Natural killer cell (primary cell): ENCODE measurements at regions of chr1 and their contacts with region 1.

Region 1: DNA sequence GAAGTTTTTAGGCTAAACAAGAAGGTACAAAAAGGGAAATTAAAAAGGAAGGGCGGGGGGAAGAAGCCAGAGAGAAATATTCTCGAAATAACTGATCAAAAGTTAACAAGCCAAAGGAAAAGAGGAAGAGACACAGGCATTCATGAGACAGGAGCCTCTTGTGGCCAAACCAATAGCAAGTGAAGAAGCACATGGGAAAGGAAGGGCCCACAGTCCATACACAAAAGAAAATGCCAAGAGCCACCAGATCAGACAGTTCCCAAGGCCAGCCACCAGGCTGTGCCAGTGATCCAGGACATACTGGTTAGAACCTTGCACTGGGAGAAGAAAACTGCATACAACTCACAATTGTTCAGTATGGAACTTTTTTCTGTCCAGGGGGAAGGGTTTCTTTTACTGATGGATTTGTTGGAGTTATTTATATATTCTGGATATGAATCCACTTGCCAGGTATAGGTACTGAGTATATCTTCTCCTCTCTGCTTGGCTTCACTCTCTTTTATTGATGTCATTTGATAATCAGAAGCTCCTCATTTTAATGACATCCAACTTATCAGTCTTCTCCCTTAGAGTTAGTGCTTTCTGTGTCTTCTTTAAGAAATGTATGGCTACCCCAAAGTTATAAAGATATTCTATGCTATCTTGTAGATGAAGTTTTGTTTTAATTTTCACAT is 76.8 kb downstream of the CD46 start:
- DNase-seq: peak; percentile 47 to 84
- ATAC-seq: peak; percentile 14 to 36 (median 18)
- H3K4me3 ChIP-seq: no peak overlapping the region
- H3K4me3 Mint-ChIP-seq: no peak overlapping the region
- H3K27ac ChIP-seq: peak overlapping the region; percentile 12
- H3K27ac Mint-ChIP-seq: peak overlapping the region; percentile 99
- H3K4me1 ChIP-seq: peaks cover 76% of the 10 kb centered on the region
- H3K4me1 Mint-ChIP-seq: peaks cover 81 to 85% of the 10 kb centered on the region in 2 donors
- H3K27me3 ChIP-seq: no peaks in the 10 kb centered on the region
- H3K27me3 Mint-ChIP-seq: peaks cover 0 to 3% of the 10 kb centered on the region in 2 donors
- CTCF ChIP-seq: peak; percentile 67

Region 2: DNA sequence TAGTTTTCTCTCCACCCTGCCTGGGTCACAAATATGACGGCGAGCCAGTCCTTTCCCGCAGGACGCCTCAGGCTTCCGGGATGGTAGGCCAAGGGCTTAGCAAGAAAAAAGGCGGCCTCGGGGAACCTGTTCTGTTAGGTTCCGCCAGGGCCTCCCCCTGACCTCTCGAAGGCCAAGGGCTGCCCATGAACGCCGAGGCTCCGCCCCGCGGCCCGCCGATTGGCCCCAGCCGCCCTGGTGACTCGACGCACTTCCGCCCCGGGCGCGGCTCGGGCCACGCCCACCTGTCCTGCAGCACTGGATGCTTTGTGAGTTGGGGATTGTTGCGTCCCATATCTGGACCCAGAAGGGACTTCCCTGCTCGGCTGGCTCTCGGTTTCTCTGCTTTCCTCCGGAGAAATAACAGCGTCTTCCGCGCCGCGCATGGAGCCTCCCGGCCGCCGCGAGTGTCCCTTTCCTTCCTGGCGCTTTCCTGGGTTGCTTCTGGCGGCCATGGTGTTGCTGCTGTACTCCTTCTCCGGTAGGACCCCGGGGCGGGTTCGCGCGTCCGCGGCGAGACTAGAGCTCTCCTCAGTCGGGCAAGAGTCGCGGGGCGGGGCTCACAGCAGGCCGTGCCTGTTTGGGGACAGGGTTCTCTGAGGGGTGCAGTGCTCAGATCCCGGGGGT is 76.7 kb before region 1 on chr1 and contains the start of gene CD46:
- intact Hi-C with region 1: loop called (anchors 2 kb)
- DNase-seq: peak; percentile 93 to 96
- ATAC-seq: peak; percentile 97 to 100 (median 98)
- H3K4me3 ChIP-seq: peak within 1 kb of the TSS; percentile 88
- H3K4me3 Mint-ChIP-seq: peak within 1 kb of the TSS; percentile 99
- H3K27ac ChIP-seq: peak within 1 kb of the TSS; percentile 91
- H3K27ac Mint-ChIP-seq: peak within 1 kb of the TSS; percentile 95 to 97
- H3K4me1 ChIP-seq: peaks cover 17% of the 10 kb centered on the region
- H3K4me1 Mint-ChIP-seq: peaks cover 49 to 56% of the 10 kb centered on the region in 2 donors
- H3K27me3 ChIP-seq: no peaks in the 10 kb centered on the region
- H3K27me3 Mint-ChIP-seq: no peaks in the 10 kb centered on the region
- CTCF ChIP-seq: no peak
- total RNA-seq, gene CD46: 110 to 126 (median 124) TPM

Region 3: DNA sequence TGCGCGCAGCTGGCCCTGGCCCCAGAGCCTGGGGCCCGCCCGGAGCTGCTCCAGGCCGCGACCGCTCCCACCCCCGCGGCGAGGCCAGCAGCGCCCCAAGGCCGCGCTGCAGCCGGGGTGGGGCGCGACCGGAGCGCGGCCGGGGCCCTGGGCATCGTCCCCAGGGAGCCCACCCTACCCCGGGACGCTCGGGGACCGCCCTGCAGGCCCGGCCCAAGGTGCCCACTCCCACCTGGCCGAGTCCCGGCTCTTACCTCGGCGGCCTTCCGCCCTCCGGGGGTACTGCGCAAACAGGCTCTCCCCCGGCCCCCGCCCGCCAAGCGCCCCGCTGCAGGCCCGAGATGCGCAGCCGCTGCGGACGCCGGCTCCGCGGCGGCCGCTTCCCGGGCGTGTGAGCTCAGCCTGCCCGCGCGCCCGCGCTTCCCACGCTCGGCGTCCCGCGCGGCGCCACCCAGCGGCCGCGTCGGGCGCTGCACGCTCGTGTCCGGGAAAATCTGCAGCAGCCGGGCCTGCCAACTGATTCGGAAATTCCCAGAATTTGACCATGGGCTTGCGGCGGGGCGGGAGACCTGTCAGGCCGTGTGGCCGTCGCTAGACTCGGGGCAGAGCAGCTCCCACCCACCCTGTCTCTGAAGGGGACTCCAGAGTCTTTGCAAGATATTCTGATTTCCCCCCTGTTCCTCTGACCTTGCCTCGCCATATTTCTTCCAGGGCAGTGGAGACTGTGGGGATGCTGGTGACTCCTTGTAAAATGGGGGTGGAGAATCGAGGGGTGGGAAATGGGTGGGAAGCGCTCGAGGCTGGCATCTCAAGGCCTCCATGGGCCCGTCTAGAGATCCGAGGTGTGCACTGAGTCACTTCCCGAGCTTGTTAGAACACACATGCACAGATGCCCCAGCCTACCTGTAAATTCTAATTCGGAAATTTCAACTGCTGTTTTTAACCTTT is 40.4 kb after region 1 on chr1:
- intact Hi-C with region 1: loop called (anchors 1 kb)
- DNase-seq: peak; percentile 78 to 92
- ATAC-seq: peak; percentile 76 to 86 (median 84)
- H3K4me3 ChIP-seq: peak overlapping the region; percentile 85
- H3K4me3 Mint-ChIP-seq: peak overlapping the region; percentile 94
- H3K27ac ChIP-seq: peak overlapping the region; percentile 82
- H3K27ac Mint-ChIP-seq: peak overlapping the region in 1 of 2 donors; percentile 84
- H3K4me1 ChIP-seq: peaks cover 66% of the 10 kb centered on the region
- H3K4me1 Mint-ChIP-seq: peaks cover 80 to 84% of the 10 kb centered on the region in 2 donors
- H3K27me3 ChIP-seq: no peaks in the 10 kb centered on the region
- H3K27me3 Mint-ChIP-seq: no peaks in the 10 kb centered on the region
- CTCF ChIP-seq: peak; percentile 84

Region 4: GRCh38 chr1:207935166-207935583 is 106.6 kb after region 1 on chr1:
- intact Hi-C with region 1: no loop called
- DNase-seq: no peak
- ATAC-seq: no peak
- H3K4me3 ChIP-seq: no peak overlapping the region
- H3K4me3 Mint-ChIP-seq: no peak overlapping the region
- H3K27ac ChIP-seq: no peak overlapping the region
- H3K27ac Mint-ChIP-seq: no peak overlapping the region
- H3K4me1 ChIP-seq: no peaks in the 10 kb centered on the region
- H3K4me1 Mint-ChIP-seq: no peaks in the 10 kb centered on the region
- H3K27me3 ChIP-seq: no peaks in the 10 kb centered on the region
- H3K27me3 Mint-ChIP-seq: peaks cover 30 to 51% of the 10 kb centered on the region in 2 donors
- CTCF ChIP-seq: no peak

Region 5: DNA sequence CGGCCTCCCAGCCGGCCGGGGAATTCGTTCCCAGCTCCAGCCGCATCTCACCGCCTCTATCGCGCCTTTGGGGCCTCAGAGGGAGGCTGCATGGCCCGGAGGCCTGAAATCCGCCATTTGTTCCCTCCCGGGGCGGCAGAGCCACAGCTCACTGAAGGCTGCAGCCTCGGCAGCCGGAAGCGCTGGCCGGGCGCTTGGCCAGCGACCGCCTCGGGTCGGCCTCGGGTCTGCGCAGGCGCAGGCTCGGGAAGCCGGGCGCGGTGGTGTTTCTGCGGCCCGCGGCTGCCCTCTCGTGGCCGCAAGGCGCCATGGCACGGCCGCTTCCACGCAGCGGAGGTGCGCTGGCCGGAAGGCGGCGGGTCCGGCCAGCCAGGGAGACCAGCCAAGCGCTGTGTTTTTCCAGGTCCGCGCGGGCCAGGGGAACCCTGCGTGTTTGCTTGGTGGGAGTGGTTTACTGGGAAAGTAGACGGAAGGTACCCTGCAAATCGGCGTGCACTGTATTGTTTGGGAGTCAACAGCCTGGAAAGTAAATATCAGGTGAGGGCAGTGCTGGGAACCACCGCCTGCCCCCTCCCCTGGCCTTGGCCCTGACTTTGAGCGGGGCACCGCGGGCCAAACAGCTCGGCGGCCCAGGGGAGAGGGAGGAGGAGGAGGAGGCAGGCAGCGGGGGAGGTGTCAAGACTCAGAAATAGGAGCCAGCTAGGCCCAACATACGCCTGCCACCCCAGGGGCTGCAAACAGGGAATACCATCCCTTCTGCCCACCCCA is 135.0 kb after region 1 on chr1:
- intact Hi-C with region 1: loop called (anchors 1 kb)
- DNase-seq: peak; percentile 90 to 92
- ATAC-seq: peak; percentile 95 to 96 (median 95)
- H3K4me3 ChIP-seq: peak overlapping the region; percentile 85
- H3K4me3 Mint-ChIP-seq: peak overlapping the region; percentile 80
- H3K27ac ChIP-seq: peak overlapping the region; percentile 84
- H3K27ac Mint-ChIP-seq: peak overlapping the region; percentile 45 to 87
- H3K4me1 ChIP-seq: peaks cover 21% of the 10 kb centered on the region
- H3K4me1 Mint-ChIP-seq: peaks cover 12 to 17% of the 10 kb centered on the region in 2 donors
- H3K27me3 ChIP-seq: peaks cover 9% of the 10 kb centered on the region
- H3K27me3 Mint-ChIP-seq: peaks cover 25 to 37% of the 10 kb centered on the region in 2 donors
- CTCF ChIP-seq: peak; percentile 99

Region 6: GRCh38 chr1:207981976-207982375 is 153.4 kb after region 1 on chr1:
- intact Hi-C with region 1: no loop called
- DNase-seq: peak in 1 of 2 donors; percentile 14
- ATAC-seq: peak in 2 of 3 donors; percentile 56 to 64
- H3K4me3 ChIP-seq: no peak overlapping the region
- H3K4me3 Mint-ChIP-seq: no peak overlapping the region
- H3K27ac ChIP-seq: no peak overlapping the region
- H3K27ac Mint-ChIP-seq: no peak overlapping the region
- H3K4me1 ChIP-seq: no peaks in the 10 kb centered on the region
- H3K4me1 Mint-ChIP-seq: no peaks in the 10 kb centered on the region
- H3K27me3 ChIP-seq: no peaks in the 10 kb centered on the region
- H3K27me3 Mint-ChIP-seq: peaks cover 18 to 41% of the 10 kb centered on the region in 2 donors
- CTCF ChIP-seq: peak; percentile 10